CD8-positive, alpha-beta T cell (primary cell): ENCODE measurements at regions of chr5 and their contacts with region 1.

Region 1: DNA sequence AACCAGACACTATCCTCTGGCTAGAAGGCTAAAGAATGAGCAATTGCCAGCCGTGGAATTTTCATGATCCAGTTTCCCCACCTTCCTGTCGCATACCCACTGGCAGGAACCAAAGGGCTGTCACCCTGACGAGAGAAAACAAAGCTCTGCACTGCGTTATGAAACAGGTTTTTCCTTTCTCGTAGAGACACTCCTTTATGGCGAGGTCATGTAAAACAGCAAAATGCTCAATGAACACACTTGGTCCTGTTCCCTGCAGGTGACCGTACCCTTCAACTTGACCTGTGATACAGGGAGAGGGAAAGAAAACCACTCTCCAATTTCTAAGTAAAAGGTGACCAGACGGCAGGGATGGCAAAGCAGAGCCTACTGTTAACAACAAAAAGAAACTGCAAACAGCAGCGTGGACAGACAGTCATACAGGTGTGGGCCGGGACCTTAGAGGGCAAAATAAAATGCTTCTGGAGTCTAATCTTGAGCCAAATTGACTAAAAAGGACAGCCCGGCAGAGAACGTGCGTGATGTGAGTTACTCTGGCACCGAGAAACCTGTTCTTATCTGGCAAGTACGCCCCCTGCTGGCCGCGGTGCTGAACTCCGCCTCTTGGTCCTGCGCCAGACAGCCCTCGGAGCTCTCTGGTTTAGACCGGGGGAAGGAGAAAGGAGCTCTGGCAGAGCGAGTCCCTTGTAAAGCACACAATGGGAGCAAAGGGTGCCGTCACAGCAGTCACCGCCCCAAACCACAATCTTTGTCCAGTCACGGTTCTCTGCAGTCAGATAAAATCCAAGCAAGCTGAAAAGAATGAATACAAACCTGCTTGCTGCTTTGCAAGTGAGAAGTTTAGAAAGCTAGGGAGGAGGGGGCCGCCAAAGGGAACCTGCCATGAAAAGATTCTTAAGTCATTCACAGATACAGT is 98.9 kb downstream of the EFNA5 start:
- DNase-seq: peak; percentile 72 to 93 (median 88)
- ATAC-seq: peak; percentile 82
- H3K4me3 ChIP-seq: peak overlapping the region; percentile 57 to 73
- H3K4me3 Mint-ChIP-seq: peak overlapping the region; percentile 85
- H3K27ac ChIP-seq: peak overlapping the region; percentile 34 to 53
- H3K27ac Mint-ChIP-seq: no peak overlapping the region
- H3K4me1 ChIP-seq: peaks cover 3% of the 10 kb centered on the region
- H3K4me1 Mint-ChIP-seq: peaks cover 18% of the 10 kb centered on the region
- H3K27me3 ChIP-seq: no peaks in the 10 kb centered on the region
- H3K27me3 Mint-ChIP-seq: peaks cover 4% of the 10 kb centered on the region
- CTCF ChIP-seq: peak; percentile 94

Region 2: DNA sequence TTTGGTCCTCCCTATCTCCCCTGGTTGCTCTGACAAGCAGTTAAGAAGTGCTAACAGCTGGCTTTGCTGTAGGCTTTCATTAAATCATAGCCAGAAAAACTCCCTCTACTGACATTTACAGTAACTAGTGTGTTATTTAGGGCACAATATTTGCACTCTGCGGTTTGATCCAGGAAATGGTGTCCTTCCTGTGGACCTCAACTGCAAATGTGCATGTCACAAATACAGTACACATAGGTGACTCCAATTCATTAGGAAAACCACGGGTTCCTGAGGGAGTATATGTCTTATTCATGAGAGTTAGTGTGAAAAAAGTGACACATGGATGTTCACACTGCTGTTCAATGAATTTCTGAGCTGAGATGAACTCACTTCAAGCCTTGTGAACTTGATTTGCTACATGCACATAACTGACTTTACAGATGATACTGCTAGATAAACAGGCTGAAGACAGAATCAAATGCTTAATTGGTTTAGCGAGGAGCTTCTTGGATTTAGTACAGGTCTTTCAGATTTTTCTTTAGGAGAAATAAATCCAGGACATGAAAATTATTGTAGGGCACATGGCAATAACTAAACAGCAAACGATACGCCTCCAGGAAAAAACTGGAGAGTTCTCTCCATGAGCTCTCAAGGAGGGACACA is 182.6 kb before region 1 on chr5:
- CTCF ChIA-PET with region 1: interaction called, 3 read pairs
- POLR2A ChIA-PET with region 1: no interaction called
- intact Hi-C with region 1: loop called in 1 of 2 experiments (anchors 10 kb)
- DNase-seq: peak in 4 of 9 experiments; percentile 17 to 76 (median 44)
- ATAC-seq: peak; percentile 49
- H3K4me3 ChIP-seq: no peak overlapping the region
- H3K4me3 Mint-ChIP-seq: no peak overlapping the region
- H3K27ac ChIP-seq: peak overlapping the region in 1 of 2 experiments; percentile 32
- H3K27ac Mint-ChIP-seq: no peak overlapping the region
- H3K4me1 ChIP-seq: peaks cover 14% of the 10 kb centered on the region
- H3K4me1 Mint-ChIP-seq: peaks cover 27% of the 10 kb centered on the region
- H3K27me3 ChIP-seq: no peaks in the 10 kb centered on the region
- H3K27me3 Mint-ChIP-seq: no peaks in the 10 kb centered on the region
- CTCF ChIP-seq: no peak

Region 3: DNA sequence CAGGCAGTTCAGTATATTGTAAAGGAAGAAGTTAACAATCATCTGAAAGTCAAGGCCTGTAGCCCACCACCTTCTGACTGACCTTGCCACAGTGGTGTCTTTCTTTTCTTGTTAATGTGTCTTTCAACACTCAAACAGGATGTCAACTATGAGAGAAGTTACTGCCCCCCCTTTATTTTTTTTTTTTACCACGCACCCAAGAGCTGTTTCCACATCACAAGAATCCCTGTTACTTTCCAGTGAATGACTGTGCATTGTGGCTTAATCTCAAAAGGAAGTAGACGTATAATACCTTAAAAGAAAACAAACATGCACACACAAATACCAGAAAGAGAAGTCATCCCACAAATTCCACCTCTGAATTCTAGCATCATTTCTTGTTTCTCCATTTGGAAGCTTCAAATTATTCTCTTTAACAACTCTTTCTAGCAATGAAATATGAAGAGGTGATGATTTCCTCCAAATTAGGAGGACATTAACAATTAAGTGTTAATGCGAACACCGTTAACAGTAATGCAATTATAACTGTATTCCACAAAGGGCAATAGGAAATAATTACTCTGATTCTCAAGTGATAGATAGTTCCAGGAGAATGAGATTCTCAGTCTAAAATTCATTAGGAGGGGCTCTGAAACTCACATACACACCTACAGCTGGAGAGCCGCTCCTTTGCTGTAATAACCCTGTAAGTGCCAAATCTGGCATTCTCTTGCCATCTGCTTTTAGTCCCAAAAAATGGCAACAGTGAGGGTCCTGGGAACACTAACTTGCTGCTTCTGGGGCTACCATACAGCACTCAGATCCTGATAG is 102.2 kb before region 1 on chr5:
- CTCF ChIA-PET with region 1: no interaction called
- POLR2A ChIA-PET with region 1: no interaction called
- intact Hi-C with region 1: loop called in 1 of 2 experiments (anchors 10 kb)
- DNase-seq: peak in 2 of 9 experiments; percentile 51 to 73
- ATAC-seq: peak; percentile 38
- H3K4me3 ChIP-seq: no peak overlapping the region
- H3K4me3 Mint-ChIP-seq: no peak overlapping the region
- H3K27ac ChIP-seq: peak overlapping the region in 1 of 2 experiments; percentile 15
- H3K27ac Mint-ChIP-seq: no peak overlapping the region
- H3K4me1 ChIP-seq: peaks cover 3% of the 10 kb centered on the region
- H3K4me1 Mint-ChIP-seq: peaks cover 13% of the 10 kb centered on the region
- H3K27me3 ChIP-seq: no peaks in the 10 kb centered on the region
- H3K27me3 Mint-ChIP-seq: no peaks in the 10 kb centered on the region
- CTCF ChIP-seq: no peak

Region 4: GRCh38 chr5:107557051-107557658 is 14.7 kb before region 1 on chr5:
- CTCF ChIA-PET with region 1: interaction called, 28 read pairs
- POLR2A ChIA-PET with region 1: no interaction called
- intact Hi-C with region 1: no loop called
- DNase-seq: no peak
- ATAC-seq: no peak
- H3K4me3 ChIP-seq: no peak overlapping the region
- H3K4me3 Mint-ChIP-seq: no peak overlapping the region
- H3K27ac ChIP-seq: no peak overlapping the region
- H3K27ac Mint-ChIP-seq: no peak overlapping the region
- H3K4me1 ChIP-seq: no peaks in the 10 kb centered on the region
- H3K4me1 Mint-ChIP-seq: no peaks in the 10 kb centered on the region
- H3K27me3 ChIP-seq: no peaks in the 10 kb centered on the region
- H3K27me3 Mint-ChIP-seq: peaks cover 6% of the 10 kb centered on the region
- CTCF ChIP-seq: no peak